ENCODE measurements at regions of chr7 and their contacts with region 1.

Region 1: DNA sequence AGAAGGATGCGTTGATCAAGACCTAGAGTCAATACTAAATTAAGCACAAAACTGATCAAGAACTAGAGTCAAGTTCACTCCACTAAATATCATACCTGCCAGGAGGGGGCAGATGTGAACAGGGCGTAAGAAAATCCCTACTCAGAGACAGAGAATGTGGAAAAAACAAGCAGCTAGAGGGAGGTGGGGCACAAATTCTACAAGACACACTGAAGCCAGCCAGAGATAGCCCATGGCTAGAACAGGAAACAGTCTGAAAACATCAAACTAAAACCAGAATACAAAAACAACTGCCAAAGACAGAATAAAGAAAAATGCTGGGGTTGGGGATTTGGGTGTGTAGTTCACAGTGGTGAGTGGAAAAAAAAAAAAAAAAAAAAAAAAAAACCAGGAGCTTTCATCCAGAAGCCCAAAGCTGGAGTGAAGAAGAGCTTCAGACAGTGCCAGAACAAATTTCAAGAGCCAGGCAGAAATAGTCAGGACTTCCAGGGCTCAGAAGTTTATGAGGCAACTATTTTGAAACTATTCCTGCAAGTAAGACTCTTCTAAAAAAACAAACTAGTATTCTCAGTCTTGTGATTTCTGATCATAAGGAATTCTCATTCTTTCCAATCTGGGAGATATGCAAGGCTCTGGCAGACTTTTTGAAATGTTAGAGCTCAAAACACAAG is 118.3 kb downstream of the CCDC71L start:
- DNase-seq: peak; percentile 48
- ATAC-seq: peak; percentile 87
- H3K4me3 ChIP-seq: no peak overlapping the region
- H3K27ac ChIP-seq: no peak overlapping the region
- H3K4me1 ChIP-seq: no peaks in the 10 kb centered on the region
- H3K27me3 ChIP-seq: no peaks in the 10 kb centered on the region
- CTCF ChIP-seq: peak; percentile 53
- EP300 ChIP-seq: no peak
- POLR2A ChIP-seq: no peak
- RAD21 ChIP-seq: 0 out of 2 replicates have a peak, but pooled peaks have one; percentile 20

Region 2: GRCh38 chr7:106305732-106306131 is 237.0 kb before region 1 on chr7:
- CTCF ChIA-PET with region 1: no interaction called
- POLR2A ChIA-PET with region 1: no interaction called
- in situ Hi-C with region 1: no loop called
- intact Hi-C with region 1: no loop called
- DNase-seq: no peak
- ATAC-seq: peak; percentile 75
- H3K4me3 ChIP-seq: no peak overlapping the region
- H3K27ac ChIP-seq: no peak overlapping the region
- H3K4me1 ChIP-seq: peaks cover 9% of the 10 kb centered on the region
- H3K27me3 ChIP-seq: peaks cover 0 to 8% of the 10 kb centered on the region in 2 experiments; a peak in 3 of 5 replicates
- CTCF ChIP-seq: no peak
- EP300 ChIP-seq: no peak
- POLR2A ChIP-seq: no peak
- RAD21 ChIP-seq: no peak

Region 3: DNA sequence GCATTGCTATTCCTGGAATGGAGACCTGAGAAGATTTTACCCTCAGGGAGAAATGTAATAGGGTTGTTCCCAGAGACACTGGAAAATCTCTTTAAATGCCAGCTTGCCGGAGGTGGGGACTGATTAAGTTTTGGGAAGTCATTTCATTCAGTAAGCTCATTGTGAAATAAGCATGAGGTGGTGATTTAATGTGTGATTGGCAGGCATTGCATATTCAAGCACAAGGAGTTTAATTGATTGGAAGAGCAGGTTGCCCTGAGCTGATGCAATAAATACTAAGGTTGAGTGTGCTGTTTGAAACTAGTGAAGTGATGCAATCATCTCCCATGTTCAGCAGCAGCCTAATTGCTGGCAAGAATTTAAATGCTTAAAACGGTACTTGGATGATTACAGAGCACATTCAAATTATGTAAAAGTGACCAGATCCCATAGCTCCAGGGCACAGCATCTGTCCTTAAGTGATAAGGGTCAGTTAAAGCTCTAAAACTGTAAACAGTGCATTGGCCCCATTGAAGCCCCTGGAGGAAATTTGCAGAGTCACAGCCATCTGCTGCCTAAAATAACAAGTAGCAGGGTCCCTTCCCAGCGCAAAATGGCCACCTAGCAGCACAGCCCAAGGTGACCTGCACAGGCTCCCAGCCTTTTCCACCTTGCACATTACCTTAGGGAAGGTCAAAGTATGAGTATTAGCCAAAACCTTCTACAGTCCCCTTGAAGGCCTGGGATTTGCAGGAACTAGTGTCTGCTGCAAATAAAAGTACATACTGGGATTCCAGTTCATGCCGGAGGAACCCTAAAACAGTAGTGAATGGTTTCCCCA is 26.2 kb after region 1 on chr7:
- CTCF ChIA-PET with region 1: no interaction called
- POLR2A ChIA-PET with region 1: no interaction called
- in situ Hi-C with region 1: no loop called
- intact Hi-C with region 1: no loop called
- DNase-seq: no peak
- ATAC-seq: no peak
- H3K4me3 ChIP-seq: no peak overlapping the region
- H3K27ac ChIP-seq: no peak overlapping the region
- H3K4me1 ChIP-seq: no peaks in the 10 kb centered on the region
- H3K27me3 ChIP-seq: 0 out of 5 replicates have a peak, but pooled peaks cover 0 to 4% of the 10 kb centered on the region in 2 experiments
- CTCF ChIP-seq: no peak
- EP300 ChIP-seq: no peak
- POLR2A ChIP-seq: no peak
- RAD21 ChIP-seq: no peak

Region 4: DNA sequence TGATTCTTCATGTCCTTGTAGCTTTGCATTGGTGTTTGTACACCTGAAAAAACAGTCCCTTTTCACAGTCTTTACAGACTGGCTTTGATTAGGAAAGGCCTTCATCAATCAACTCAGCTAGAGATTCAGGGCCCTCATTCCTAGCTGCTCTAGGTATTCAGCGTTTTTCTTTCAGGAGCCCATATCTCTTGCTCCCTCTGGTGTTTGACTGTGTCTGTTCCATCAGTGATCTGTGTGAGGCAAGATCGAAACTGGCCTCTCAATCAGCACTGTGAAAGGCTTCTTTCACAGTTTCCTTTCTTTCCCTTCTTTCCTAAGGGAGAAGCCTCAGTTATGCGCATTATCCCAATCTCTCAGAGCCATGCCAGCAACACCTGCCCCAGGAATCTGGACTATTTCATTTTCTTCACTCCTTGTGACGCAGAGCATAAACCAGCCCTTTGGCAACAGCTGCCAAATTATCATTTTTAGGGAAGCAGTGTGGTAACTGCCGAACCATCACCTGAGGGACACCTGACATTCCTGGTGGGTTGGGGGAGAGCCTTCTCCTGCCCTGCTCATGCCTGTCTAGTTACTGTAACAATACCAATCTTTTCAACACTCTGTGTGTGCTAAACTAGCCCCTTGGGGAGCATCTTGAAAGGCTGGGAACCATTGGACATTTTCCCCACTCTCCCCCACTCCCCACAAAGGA is 194.0 kb after region 1 on chr7:
- CTCF ChIA-PET with region 1: interaction called, 6 read pairs
- POLR2A ChIA-PET with region 1: no interaction called
- in situ Hi-C with region 1: loop called (anchors 10 kb)
- intact Hi-C with region 1: no loop called
- DNase-seq: peak; percentile 28
- ATAC-seq: peak; percentile 86
- H3K4me3 ChIP-seq: no peak overlapping the region
- H3K27ac ChIP-seq: no peak overlapping the region
- H3K4me1 ChIP-seq: no peaks in the 10 kb centered on the region
- H3K27me3 ChIP-seq: no peaks in the 10 kb centered on the region
- CTCF ChIP-seq: peak; percentile 56
- EP300 ChIP-seq: no peak
- POLR2A ChIP-seq: no peak
- RAD21 ChIP-seq: no peak

Region 5: DNA sequence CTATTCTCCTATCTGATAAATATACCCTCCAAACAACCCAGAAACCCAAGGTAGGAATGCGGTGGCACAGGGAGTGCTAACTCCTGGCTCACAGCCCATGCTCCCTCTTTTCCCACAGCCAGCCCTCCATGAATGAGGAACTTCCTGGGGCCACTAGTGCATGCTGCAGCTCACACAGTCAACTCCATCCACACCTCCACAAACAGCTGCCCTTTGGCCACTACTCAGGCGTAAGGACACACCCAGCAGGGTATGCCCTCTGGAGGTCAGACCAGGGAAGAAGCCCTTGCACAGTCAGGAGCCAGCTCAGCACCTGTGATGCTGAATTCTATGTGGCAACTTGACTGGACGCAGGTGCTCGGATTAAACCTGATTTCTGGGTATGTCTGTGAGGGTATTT is 237.2 kb after region 1 on chr7:
- CTCF ChIA-PET with region 1: no interaction called
- POLR2A ChIA-PET with region 1: no interaction called
- in situ Hi-C with region 1: no loop called
- intact Hi-C with region 1: loop called (anchors 1 kb)
- DNase-seq: peak; percentile 46
- ATAC-seq: peak; percentile 100
- H3K4me3 ChIP-seq: no peak overlapping the region
- H3K27ac ChIP-seq: no peak overlapping the region
- H3K4me1 ChIP-seq: no peaks in the 10 kb centered on the region
- H3K27me3 ChIP-seq: no peaks in the 10 kb centered on the region
- CTCF ChIP-seq: peak; percentile 62
- EP300 ChIP-seq: no peak
- POLR2A ChIP-seq: no peak
- RAD21 ChIP-seq: no peak

Measured in HepG2 (cell line).